K562 (cell line): ENCODE measurements at regions of chr11 and their contacts with region 1.

Region 1: GRCh38 chr11:65204646-65205601 is 23.2 kb downstream of the CAPN1 start:
- DNase-seq: peak; percentile 68 to 91 (median 86)
- ATAC-seq: peak; percentile 95
- H3K4me3 ChIP-seq: no peak overlapping the region
- H3K27ac ChIP-seq: no peak overlapping the region
- H3K4me1 ChIP-seq: peaks cover 0 to 18% of the 10 kb centered on the region in 2 experiments; a peak in 2 of 5 replicates
- H3K27me3 ChIP-seq: no peaks in the 10 kb centered on the region
- CTCF ChIP-seq: peak; percentile 90 to 94 (median 91)
- EP300 ChIP-seq: no peak
- POLR2A ChIP-seq: no peak
- RAD21 ChIP-seq: peak; percentile 58 to 77

Region 2: GRCh38 chr11:65186738-65187137 is 18.2 kb before region 1 on chr11:
- CTCF ChIA-PET with region 1: no interaction called
- POLR2A ChIA-PET with region 1: no interaction called
- in situ Hi-C with region 1: no loop called
- intact Hi-C with region 1: no loop called
- DNase-seq: no peak
- ATAC-seq: no peak
- H3K4me3 ChIP-seq: no peak overlapping the region
- H3K27ac ChIP-seq: no peak overlapping the region
- H3K4me1 ChIP-seq: peaks cover 9 to 47% of the 10 kb centered on the region in 2 experiments
- H3K27me3 ChIP-seq: no peaks in the 10 kb centered on the region
- CTCF ChIP-seq: no peak
- EP300 ChIP-seq: no peak
- POLR2A ChIP-seq: no peak
- RAD21 ChIP-seq: no peak

Region 3: GRCh38 chr11:65251476-65251875 is 46.6 kb after region 1 on chr11:
- CTCF ChIA-PET with region 1: interaction called, 19 read pairs
- POLR2A ChIA-PET with region 1: interaction called, 3 read pairs
- in situ Hi-C with region 1: no loop called
- intact Hi-C with region 1: loop called (anchors 5 kb)
- DNase-seq: no peak
- ATAC-seq: no peak
- H3K4me3 ChIP-seq: no peak overlapping the region
- H3K27ac ChIP-seq: no peak overlapping the region
- H3K4me1 ChIP-seq: no peaks in the 10 kb centered on the region; a peak in 1 of 5 replicates
- H3K27me3 ChIP-seq: no peaks in the 10 kb centered on the region
- CTCF ChIP-seq: no peak
- EP300 ChIP-seq: no peak
- POLR2A ChIP-seq: no peak
- RAD21 ChIP-seq: no peak

Region 4: DNA sequence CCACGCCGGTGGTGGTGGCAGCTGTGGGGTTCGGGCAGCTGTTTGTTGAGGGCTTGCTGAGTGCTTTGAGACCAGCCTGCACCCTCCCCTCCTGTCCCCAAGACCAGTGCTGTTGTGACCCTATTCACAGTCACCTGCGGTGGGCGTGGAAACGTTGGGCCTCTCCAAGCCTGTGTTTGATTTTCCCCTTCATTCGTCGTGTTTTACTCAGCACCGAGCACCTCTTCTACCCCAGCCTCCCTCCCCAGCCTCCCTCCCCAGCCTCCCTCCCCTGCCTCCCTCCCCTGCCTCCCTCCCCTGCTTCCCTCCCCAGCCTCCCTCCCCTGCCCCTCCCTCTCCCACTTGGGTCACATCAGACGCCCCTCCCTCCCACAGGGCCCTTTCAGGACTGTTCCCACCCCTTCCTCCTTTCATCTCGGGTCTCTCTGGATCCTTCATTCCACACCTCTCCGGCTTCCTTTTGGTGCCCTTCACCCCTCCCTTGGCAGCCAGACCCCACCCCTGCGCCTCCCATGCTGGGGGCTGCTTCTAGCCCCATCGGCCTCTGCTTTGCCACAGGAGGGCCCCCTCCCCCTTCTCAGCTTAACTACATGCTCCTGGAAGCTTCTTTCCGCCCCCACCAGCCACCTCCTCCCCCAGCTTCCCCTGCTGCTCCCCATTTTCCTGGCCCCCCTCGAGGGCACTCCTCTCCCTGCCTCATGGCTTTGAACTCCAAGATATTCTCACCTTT is 196.3 kb after region 1 on chr11:
- CTCF ChIA-PET with region 1: no interaction called
- POLR2A ChIA-PET with region 1: no interaction called
- in situ Hi-C with region 1: no loop called
- intact Hi-C with region 1: no loop called
- DNase-seq: peak in 1 of 4 experiments; percentile 39
- ATAC-seq: peak; percentile 28; the same call in 2 of the 3 replicates
- H3K4me3 ChIP-seq: no peak overlapping the region
- H3K27ac ChIP-seq: no peak overlapping the region
- H3K4me1 ChIP-seq: peaks cover 9 to 61% of the 10 kb centered on the region in 2 experiments
- H3K27me3 ChIP-seq: no peaks in the 10 kb centered on the region
- CTCF ChIP-seq: no peak
- EP300 ChIP-seq: no peak
- POLR2A ChIP-seq: no peak
- RAD21 ChIP-seq: no peak

Region 5: GRCh38 chr11:66112601-66113098 is 907.7 kb after region 1 on chr11:
- CTCF ChIA-PET with region 1: no interaction called
- POLR2A ChIA-PET with region 1: no interaction called
- in situ Hi-C with region 1: no loop called
- intact Hi-C with region 1: no loop called
- DNase-seq: no peak
- ATAC-seq: peak; percentile 44; the same call in 2 of the 3 replicates
- H3K4me3 ChIP-seq: no peak overlapping the region
- H3K27ac ChIP-seq: no peak overlapping the region
- H3K4me1 ChIP-seq: peaks cover 9 to 18% of the 10 kb centered on the region in 2 experiments; a peak in 4 of 5 replicates
- H3K27me3 ChIP-seq: no peaks in the 10 kb centered on the region
- CTCF ChIP-seq: no peak
- EP300 ChIP-seq: no peak
- POLR2A ChIP-seq: no peak
- RAD21 ChIP-seq: no peak